Activated naive CD4-positive, alpha-beta T cell treated with anti-CD3 and anti-CD28 coated beads for 36 hours (primary cell): ENCODE measurements at regions of chr2 and their contacts with region 1.

Region 1: GRCh38 chr2:78979380-78980151 is 45.9 kb upstream of the REG3G start:
- DNase-seq: peak; percentile 42
- H3K4me3 Mint-ChIP-seq: no peak overlapping the region
- H3K27ac Mint-ChIP-seq: no peak overlapping the region
- H3K4me1 Mint-ChIP-seq: no peaks in the 10 kb centered on the region
- H3K27me3 Mint-ChIP-seq: peaks cover 7% of the 10 kb centered on the region

Region 2: DNA sequence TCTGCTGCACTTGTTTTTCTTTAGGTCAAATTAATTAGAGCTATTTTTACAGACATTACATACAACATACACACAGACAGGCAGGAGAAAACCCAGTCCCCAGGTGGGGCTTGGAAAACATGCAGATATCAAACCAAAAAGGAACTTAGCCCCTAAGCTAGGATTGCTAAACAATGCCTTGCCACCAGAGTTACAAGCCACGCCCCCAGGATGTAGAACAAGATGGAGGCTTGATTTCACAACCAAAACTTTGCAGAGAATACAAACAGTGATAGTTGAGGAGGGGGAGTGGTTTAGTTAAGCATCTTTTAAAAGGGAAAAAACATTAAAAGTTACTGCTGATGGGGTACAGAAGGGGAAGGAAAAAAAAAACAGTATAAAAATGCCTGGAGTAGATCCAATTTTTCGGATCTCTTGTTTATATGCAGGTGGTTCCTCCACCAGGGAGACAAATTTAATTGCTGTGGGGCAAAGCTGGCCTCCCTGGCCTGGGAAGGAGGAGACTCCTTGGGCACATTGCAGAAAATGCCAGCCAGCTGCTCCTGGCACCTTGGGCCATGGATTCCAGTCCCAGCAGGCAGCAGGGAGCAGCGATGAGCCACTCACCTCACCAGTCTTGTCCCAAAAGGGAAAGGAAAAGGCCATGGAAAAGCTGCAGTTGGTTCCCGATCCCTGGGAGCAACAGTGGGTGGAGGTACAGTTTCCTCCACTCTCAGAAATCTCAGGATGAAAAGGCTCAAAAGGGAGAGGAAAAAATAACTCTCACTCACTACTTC is 302.5 kb before region 1 on chr2:
- CTCF ChIA-PET with region 1: no interaction called
- intact Hi-C with region 1: loop called (anchors 10 kb)
- DNase-seq: no peak
- H3K4me3 Mint-ChIP-seq: no peak overlapping the region
- H3K27ac Mint-ChIP-seq: no peak overlapping the region
- H3K4me1 Mint-ChIP-seq: no peaks in the 10 kb centered on the region
- H3K27me3 Mint-ChIP-seq: no peaks in the 10 kb centered on the region